ENCODE measurements at regions of chr12 and their contacts with region 1.

Region 1: GRCh38 chr12:130044991-130045621 is 117.2 kb upstream of the FZD10 start:
- DNase-seq: no peak
- ATAC-seq: no peak
- H3K4me3 ChIP-seq: no peak overlapping the region
- H3K27ac ChIP-seq: no peak overlapping the region
- H3K4me1 ChIP-seq: no peaks in the 10 kb centered on the region
- H3K27me3 ChIP-seq: no peaks in the 10 kb centered on the region
- CTCF ChIP-seq: no peak
- POLR2A ChIP-seq: no peak

Region 2: GRCh38 chr12:129961091-129961490 is 84.0 kb before region 1 on chr12:
- intact Hi-C with region 1: no loop called
- DNase-seq: no peak
- ATAC-seq: no peak
- H3K4me3 ChIP-seq: no peak overlapping the region
- H3K27ac ChIP-seq: no peak overlapping the region
- H3K4me1 ChIP-seq: peaks cover 17% of the 10 kb centered on the region
- H3K27me3 ChIP-seq: no peaks in the 10 kb centered on the region
- CTCF ChIP-seq: no peak
- POLR2A ChIP-seq: no peak

Region 3: DNA sequence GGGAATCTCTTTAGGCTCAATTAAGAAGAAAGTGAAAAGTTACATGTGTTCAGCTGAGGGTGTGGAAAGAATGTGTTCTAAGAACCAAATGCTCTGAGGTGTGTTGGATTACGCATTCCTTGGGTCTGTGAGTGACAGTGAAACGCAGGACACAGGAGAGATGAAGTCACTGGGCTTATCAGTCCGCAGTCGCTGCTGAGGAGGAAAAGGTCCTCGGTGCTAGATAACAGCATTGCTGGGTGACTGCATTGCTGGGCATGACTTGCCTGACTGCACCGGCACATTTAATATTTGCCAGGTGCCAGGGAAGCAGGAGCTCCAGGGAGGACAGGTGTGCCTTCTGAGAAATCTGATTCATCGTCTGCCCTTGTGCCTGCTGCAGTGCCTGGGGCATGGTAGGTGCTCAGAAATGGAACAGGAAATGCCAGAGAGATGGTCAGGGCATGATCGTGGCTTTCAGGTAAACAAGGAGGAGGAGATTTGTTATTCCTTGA is 52.7 kb after region 1 on chr12:
- intact Hi-C with region 1: no loop called
- DNase-seq: no peak
- ATAC-seq: peak; percentile 42
- H3K4me3 ChIP-seq: no peak overlapping the region
- H3K27ac ChIP-seq: no peak overlapping the region
- H3K4me1 ChIP-seq: no peaks in the 10 kb centered on the region
- H3K27me3 ChIP-seq: no peaks in the 10 kb centered on the region
- CTCF ChIP-seq: no peak
- POLR2A ChIP-seq: no peak

Region 4: GRCh38 chr12:130335517-130336392 is 290.6 kb after region 1 on chr12:
- intact Hi-C with region 1: loop called (anchors 5 kb)
- DNase-seq: peak; percentile 59 to 69 (median 64)
- ATAC-seq: peak; percentile 60
- H3K4me3 ChIP-seq: no peak overlapping the region
- H3K27ac ChIP-seq: no peak overlapping the region
- H3K4me1 ChIP-seq: no peaks in the 10 kb centered on the region
- H3K27me3 ChIP-seq: no peaks in the 10 kb centered on the region
- CTCF ChIP-seq: peak in 6 of 7 experiments; percentile 51 to 81 (median 72)
- POLR2A ChIP-seq: no peak